GM10248 (cell line): ENCODE measurements at regions of chr1 and their contacts with region 1.

Region 1: DNA sequence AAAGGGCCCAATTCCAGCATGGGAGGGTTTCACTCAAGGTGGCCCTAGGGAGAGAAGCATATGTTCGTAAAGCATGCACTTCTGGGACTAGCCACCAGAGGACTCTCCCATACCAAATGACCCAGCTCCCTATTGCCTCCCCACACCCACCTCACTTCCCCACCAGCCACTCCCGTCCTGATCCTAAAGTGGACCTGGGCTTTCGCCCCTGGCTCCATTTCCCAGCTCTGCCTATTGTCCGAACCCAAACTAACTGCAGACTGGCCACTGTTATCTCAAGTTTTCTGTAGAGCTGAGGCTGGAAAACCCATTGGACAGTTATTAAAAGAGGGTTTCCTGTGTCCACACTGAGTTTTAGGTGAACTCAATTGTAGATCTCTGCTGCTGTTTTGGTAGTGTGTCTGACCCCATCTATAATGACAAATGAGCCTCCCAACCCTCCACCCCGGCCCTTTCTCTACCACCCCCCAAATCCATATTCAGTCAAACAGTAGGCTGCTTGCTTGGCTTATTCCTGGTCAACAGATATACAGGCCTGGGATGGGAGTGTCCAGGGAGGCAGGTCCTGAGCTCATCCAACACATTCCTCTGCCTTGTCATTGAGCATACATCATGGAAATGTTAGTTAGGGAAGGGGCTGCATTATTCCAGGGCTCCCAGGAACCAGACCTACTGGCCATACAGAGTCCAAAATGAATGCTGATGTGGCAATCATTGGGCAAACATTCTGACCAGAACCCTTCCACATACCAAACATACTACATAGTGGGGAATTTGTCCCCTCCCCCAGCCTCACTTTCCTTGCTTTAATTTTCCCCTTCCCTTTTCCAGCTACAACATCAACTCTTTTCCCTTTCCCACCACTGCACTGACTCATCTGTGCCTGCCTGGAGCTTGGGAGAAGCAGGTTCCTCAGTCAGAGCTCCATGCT is 59.2 kb downstream of the ABCA4 start:
- DNase-seq: peak; percentile 74
- CTCF ChIP-seq: peak; percentile 80

Region 2: DNA sequence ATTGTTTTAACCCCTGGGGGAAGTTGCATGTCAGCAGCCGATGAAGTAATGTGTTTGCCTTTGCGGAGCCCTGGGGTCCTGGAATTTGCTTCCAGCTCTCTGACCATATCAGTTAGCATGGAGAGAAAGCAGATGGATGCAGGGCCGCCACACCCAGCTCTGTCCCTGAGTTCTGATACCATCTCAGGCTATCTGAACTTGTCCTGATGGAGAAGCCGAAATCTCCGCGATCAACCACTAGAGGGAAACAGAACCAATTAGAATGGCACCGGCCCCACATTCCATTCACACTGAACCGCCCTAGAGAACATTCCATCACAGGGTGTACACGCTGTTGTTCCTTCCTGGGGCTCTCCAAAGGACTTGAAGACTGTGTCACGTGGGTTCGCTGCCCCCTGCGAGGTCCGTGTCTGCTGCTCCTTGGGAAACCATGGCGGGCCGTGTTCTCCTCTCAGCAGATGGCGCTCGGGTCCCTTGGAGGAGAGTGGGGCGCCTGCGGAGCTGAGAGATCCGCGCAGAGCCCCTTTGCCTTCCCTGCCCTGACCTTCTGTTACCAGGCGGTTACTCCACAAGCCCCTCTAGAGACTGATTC is 16.2 kb before region 1 on chr1:
- CTCF ChIA-PET with region 1: interaction called, 235 read pairs
- POLR2A ChIA-PET with region 1: no interaction called
- DNase-seq: peak; percentile 53
- CTCF ChIP-seq: peak; percentile 34

Region 3: GRCh38 chr1:94083681-94084080 is 21.9 kb after region 1 on chr1:
- CTCF ChIA-PET with region 1: interaction called, 10 read pairs
- POLR2A ChIA-PET with region 1: no interaction called
- DNase-seq: no peak
- CTCF ChIP-seq: no peak

Region 4: DNA sequence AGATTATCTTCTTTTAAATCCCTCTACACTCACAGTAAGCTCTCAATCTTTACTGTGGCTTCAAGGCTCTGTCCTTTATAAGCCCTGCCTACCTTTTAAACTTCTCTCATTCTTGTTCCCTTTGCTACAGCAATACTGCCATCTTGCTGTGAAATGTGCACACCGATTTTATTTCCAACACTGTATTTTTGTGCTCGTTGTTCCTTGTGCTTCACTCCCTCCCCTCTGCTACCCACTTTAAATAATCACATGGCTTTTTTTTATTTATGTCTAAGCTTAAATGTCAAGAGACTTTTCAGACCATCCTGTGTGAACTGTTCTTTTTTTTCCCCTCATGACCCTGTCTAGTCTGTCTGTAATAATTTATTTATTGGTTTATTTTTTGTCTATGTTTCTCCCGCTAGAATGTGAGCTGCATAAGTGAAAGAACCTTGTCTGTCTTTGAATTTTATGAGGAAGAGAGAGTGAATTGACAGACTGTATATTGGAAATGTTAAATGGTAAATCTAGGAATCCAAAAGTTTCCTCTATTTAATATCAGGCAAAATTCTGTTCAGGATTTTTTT is 402.1 kb after region 1 on chr1:
- CTCF ChIA-PET with region 1: interaction called, 24 read pairs
- POLR2A ChIA-PET with region 1: no interaction called
- DNase-seq: peak; percentile 22
- CTCF ChIP-seq: peak; percentile 60